ENCODE measurements at regions of chr12 and their contacts with region 1.

Region 1: DNA sequence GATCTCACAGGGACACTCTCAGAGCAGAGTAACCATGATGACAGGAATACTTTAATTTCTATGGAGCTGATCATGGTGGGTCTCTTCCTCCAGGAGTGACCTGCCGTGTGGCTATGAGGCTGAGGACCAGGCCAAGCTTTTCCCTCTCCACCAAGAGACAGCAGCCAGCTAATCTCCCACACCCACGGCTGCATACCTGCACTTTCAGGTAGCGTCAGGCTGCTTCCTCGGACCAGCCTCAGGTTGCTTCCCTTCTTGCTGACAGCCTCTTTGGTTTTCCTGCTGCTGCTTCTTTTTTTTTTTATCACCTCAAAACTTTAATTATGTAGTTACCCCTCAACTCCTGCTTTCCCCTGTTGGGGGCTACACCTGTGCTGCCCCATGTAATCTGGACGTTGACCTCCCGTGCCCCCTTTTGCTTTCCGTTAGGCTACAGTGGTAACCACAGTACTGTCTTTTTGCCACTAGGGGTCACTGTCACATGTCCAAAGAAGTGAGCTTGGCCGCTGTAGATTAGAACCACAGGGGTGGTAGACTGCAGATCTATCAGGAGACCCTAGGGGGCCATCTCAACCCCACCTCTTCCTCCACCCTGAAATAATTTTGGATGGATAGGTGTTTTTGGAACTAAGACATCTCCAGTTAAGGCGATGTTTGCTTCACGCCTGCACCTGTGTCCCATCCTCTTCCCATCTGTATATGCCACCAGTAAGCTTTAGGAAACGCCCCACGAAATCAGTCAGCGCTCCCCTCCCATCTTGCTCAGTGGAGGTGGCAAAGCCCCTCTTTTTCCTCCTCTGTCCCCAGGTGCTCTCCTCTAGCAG is 7.8 kb upstream of the PIP4K2C start:
- DNase-seq: peak; percentile 84
- ATAC-seq: peak; percentile 88
- H3K4me3 ChIP-seq: no peak overlapping the region
- H3K27ac ChIP-seq: no peak overlapping the region
- H3K4me1 ChIP-seq: peaks cover 9% of the 10 kb centered on the region
- H3K27me3 ChIP-seq: no peaks in the 10 kb centered on the region
- CTCF ChIP-seq: peak; percentile 97

Region 2: DNA sequence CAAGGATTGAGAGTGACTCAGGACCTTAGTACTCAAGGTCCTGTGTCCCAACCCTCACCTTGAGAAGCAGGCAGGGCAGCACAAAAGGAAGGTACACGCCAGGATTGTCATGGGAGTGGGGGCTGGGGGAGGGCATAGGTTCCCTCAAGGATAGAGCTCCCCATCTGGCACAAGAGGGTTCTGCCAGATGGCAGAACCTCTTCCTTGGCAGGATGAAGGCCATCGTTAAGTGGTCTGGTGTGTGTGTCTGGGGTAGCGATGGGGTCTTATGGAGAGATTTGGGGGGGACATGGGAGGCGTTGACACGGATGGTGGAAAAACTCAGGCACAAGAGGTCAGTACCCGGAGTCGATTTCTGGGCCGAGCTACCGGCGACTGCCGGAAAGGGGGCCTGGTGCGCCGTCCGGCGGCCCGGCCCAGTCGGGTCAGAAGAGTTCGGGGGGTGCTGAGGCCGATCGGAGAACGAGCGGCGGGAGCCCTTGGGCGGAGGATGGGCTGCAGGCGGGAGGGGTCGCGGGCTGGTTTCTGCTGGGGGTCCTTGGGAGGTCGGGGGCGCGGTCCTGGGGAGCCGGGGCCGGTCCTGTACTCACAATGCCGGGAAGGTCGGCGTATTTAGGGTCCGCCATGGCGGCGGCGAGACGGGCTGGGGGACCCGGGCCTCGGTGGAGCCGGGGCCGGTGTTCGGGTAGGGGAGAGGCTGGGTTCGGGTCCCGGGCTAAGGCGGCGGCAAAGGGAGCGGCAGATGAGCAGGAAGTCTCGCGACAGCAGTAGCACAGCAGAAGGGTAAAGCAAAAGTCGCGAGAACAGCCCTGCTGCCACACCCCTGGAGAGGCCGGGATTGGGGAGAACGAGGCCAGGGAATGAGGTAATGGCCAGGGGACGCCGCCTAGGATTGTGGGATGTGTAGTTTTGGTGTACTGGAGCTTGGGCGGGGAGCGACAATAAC is 36.5 kb before region 1 on chr12 and contains the start of gene DCTN2:
- CTCF ChIA-PET with region 1: interaction called, 4 read pairs
- POLR2A ChIA-PET with region 1: interaction called, 3 read pairs
- intact Hi-C with region 1: loop called (anchors 2 kb)
- DNase-seq: peak; percentile 96
- ATAC-seq: peak; percentile 98
- H3K4me3 ChIP-seq: peak within 1 kb of the TSS; percentile 89
- H3K27ac ChIP-seq: peak within 1 kb of the TSS; percentile 49
- H3K4me1 ChIP-seq: peaks cover 15% of the 10 kb centered on the region
- H3K27me3 ChIP-seq: no peaks in the 10 kb centered on the region
- CTCF ChIP-seq: no peak
- total RNA-seq, gene DCTN2: 88.5 and 96.4 TPM in 2 replicates

Region 3: GRCh38 chr12:57621497-57622292 is 38.5 kb after region 1 on chr12:
- CTCF ChIA-PET with region 1: interaction called, 4 read pairs
- POLR2A ChIA-PET with region 1: no interaction called
- intact Hi-C with region 1: loop called (anchors 1 kb)
- DNase-seq: peak; percentile 44
- ATAC-seq: peak; percentile 90
- H3K4me3 ChIP-seq: no peak overlapping the region
- H3K27ac ChIP-seq: no peak overlapping the region
- H3K4me1 ChIP-seq: no peaks in the 10 kb centered on the region
- H3K27me3 ChIP-seq: peaks cover 15% of the 10 kb centered on the region
- CTCF ChIP-seq: peak; percentile 93

Region 4: GRCh38 chr12:57693659-57694458 is 110.6 kb after region 1 on chr12 and contains the start of gene OS9:
- CTCF ChIA-PET with region 1: no interaction called
- POLR2A ChIA-PET with region 1: no interaction called
- intact Hi-C with region 1: loop called (anchors 5 kb)
- DNase-seq: peak; percentile 99
- ATAC-seq: peak; percentile 98
- H3K4me3 ChIP-seq: peak within 1 kb of the TSS; percentile 97
- H3K27ac ChIP-seq: no peak within 1 kb of the TSS
- H3K4me1 ChIP-seq: peaks cover 12% of the 10 kb centered on the region
- H3K27me3 ChIP-seq: no peaks in the 10 kb centered on the region
- CTCF ChIP-seq: peak; percentile 74
- total RNA-seq, gene OS9: 145 and 223 TPM in 2 replicates